Left colon (tissue), 2 donors: ENCODE measurements at regions of chr2 and their contacts with region 1.

Region 1: DNA sequence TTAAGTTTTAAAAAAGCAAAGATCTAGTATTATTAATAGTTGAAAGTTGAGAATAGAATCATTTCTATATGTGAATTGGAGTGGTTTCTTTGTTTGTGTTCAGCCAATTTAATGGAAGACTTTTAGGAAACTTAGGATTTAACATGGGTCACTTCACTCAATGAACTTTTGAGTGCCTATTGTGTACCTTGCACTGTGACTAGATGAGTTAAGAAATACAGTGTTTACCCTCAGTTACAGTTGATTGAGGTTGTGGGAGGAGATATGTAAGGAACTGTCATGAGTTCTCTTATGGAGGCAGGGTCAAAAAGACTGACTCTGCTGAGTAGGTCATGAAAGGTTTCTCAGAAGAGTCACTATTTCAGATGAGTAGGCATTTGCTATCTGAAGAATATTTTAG is 98.6 kb downstream of the RAB3GAP1 start:
- DNase-seq: no peak
- ATAC-seq: peak; percentile 81

Region 2: DNA sequence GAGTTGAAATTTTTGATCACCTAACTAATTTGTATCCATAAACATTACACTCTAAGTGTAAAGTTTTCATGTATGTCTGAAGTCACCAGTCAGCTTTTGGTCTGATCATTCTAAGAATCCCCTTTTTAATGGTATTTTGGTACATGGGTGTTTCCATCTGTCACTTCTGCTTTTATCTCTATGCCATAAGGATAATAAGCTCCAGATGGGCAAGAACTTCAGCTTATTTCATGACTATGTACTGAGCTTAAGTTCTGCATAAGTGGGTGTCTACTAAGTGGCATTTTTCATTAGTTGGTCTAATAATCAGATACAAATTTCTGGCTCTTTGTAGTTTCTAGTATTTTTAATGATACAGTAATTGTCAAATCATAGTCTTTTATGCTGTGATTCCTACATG is 611.3 kb after region 1 on chr2:
- intact Hi-C with region 1: loop called in 1 of 2 experiments (anchors 10 kb)
- DNase-seq: no peak
- ATAC-seq: no peak